ENCODE measurements at regions of chr3 and their contacts with region 1.

Region 1: GRCh38 chr3:171851680-171852058 is 8.5 kb downstream of the TMEM212 start:
- DNase-seq: peak; percentile 98
- H3K4me3 ChIP-seq: no peak overlapping the region
- H3K27ac ChIP-seq: peak overlapping the region; percentile 90
- H3K4me1 ChIP-seq: peaks cover 25% of the 10 kb centered on the region
- H3K27me3 ChIP-seq: no peaks in the 10 kb centered on the region
- CTCF ChIP-seq: no peak
- POLR2A ChIP-seq: peak; percentile 49

Region 2: GRCh38 chr3:171838218-171838761 is 13.4 kb before region 1 on chr3:
- CTCF ChIA-PET with region 1: interaction called, 12 read pairs
- POLR2A ChIA-PET with region 1: no interaction called
- dilution Hi-C with region 1: no loop called
- intact Hi-C with region 1: loop called (anchors 1 kb)
- DNase-seq: peak; percentile 94
- H3K4me3 ChIP-seq: no peak overlapping the region
- H3K27ac ChIP-seq: peak overlapping the region; percentile 77
- H3K4me1 ChIP-seq: peaks cover 64% of the 10 kb centered on the region
- H3K27me3 ChIP-seq: no peaks in the 10 kb centered on the region
- CTCF ChIP-seq: peak in 1 of 2 donors; percentile 12
- POLR2A ChIP-seq: no peak

Region 3: GRCh38 chr3:171878461-171879225 is 27.0 kb after region 1 on chr3:
- CTCF ChIA-PET with region 1: no interaction called
- POLR2A ChIA-PET with region 1: no interaction called
- dilution Hi-C with region 1: no loop called
- intact Hi-C with region 1: no loop called
- DNase-seq: peak; percentile 55
- H3K4me3 ChIP-seq: no peak overlapping the region
- H3K27ac ChIP-seq: no peak overlapping the region
- H3K4me1 ChIP-seq: peaks cover 39% of the 10 kb centered on the region
- H3K27me3 ChIP-seq: no peaks in the 10 kb centered on the region
- CTCF ChIP-seq: no peak
- POLR2A ChIP-seq: no peak

Region 4: DNA sequence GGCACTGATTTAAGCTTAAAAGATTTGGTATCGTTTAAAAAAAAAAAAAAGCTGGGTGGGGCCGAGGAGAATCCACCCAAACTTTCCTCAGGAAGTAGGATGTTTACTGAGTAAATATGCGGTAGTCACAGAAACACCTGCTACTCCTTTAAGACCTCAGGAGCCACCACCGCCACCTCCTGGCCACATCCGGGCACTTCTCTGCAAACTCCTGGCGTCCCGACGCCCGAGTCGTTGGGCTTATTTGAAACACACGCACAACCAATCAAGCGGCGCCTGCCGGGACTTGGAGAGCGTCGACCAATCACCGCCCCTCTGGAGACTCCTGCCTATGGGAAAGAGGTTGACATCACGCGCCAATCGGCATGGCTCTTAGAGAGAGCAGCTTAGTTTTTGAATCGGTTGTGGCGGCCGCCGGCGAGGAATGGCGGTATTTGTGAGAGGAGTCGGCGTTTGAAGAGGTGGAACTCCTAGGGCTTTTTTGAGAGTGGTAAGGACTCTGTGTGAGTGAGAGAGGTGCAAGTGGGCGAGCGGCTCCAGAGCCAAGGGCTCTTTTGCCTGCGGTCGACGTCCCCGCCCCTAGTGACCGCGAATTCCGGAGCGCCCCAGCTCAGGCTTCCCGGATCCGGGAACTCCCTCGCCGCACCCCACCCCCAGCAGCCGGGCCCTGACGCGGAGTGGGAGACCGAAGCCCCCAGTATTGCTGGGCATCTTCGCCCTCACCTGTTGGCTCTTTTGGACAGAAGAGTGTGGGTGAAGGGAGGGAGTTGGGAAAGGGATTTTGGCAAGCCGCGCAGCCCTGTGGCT is 898.9 kb after region 1 on chr3 and contains the start of gene ECT2:
- CTCF ChIA-PET with region 1: no interaction called
- POLR2A ChIA-PET with region 1: no interaction called
- dilution Hi-C with region 1: no loop called
- intact Hi-C with region 1: no loop called
- DNase-seq: peak; percentile 99
- H3K4me3 ChIP-seq: peak within 1 kb of the TSS; percentile 63 to 100 (median 100)
- H3K27ac ChIP-seq: peak within 1 kb of the TSS; percentile 97
- H3K4me1 ChIP-seq: peaks cover 32% of the 10 kb centered on the region
- H3K27me3 ChIP-seq: no peaks in the 10 kb centered on the region
- CTCF ChIP-seq: peak; percentile 79 to 80
- POLR2A ChIP-seq: peak; percentile 63
- total RNA-seq, gene ECT2: 44.7 and 47.5 TPM in 2 replicates